GM12878 (cell line): ENCODE measurements at regions of chr10 and their contacts with region 1.

Region 1: DNA sequence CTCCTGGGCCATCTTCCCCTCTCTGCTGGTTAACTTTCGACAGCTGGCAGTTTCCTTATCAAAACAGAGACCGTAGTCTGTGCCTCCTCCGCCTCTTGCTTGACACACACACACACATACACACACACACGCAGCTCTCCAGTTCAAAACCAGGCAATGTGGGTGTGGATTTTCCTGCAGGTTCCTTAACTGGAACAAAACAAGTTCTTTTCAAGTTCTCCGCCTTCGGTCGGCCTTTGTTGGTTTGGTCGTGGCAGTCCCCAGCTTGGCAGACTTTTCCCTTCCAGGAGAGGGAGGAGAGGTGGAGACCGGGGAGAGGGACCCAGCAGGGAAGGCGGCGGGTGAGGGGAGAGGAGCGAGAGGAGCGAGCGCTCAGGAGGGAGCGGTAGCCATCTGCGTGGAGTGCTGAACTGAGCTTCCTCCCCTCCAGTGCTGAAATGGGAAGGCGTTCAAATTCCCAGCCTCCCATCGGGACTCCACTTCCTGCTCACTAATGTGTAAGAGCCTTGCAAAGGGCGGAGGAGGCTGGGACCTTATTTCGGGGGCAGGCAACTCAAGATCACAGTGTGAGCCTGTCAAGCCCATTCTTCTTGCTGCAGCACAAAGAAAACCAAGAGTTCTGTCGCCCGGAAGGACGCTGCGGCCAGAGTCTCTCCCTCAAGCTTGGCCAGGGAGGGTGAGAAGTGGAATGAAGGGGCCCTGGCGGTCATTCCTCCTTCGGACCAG is 120.6 kb downstream of the PRPF18 start:
- DNase-seq: no peak
- ATAC-seq: peak; percentile 77
- H3K4me3 ChIP-seq: peak overlapping the region; percentile 86
- H3K27ac ChIP-seq: peak overlapping the region; percentile 92
- H3K4me1 ChIP-seq: peaks cover 25% of the 10 kb centered on the region
- H3K27me3 ChIP-seq: no peaks in the 10 kb centered on the region
- CTCF ChIP-seq: no peak
- EP300 ChIP-seq: no peak
- POLR2A ChIP-seq: peak; percentile 65
- RAD21 ChIP-seq: no peak; the same call in 1 of the 2 replicates

Region 2: GRCh38 chr10:13684252-13684791 is 23.0 kb before region 1 on chr10:
- CTCF ChIA-PET with region 1: no interaction called
- POLR2A ChIA-PET with region 1: interaction called, 3 read pairs
- RAD21 ChIA-PET with region 1: interaction called, 5 read pairs
- SMC1A ChIA-PET with region 1: interaction called, 14 read pairs
- in situ Hi-C with region 1: no loop called
- intact Hi-C with region 1: no loop called
- DNase-seq: no peak
- ATAC-seq: no peak
- H3K4me3 ChIP-seq: no peak overlapping the region
- H3K27ac ChIP-seq: no peak overlapping the region
- H3K4me1 ChIP-seq: peaks cover 17% of the 10 kb centered on the region
- H3K27me3 ChIP-seq: no peaks in the 10 kb centered on the region
- CTCF ChIP-seq: no peak
- EP300 ChIP-seq: no peak
- POLR2A ChIP-seq: no peak
- RAD21 ChIP-seq: no peak

Region 3: DNA sequence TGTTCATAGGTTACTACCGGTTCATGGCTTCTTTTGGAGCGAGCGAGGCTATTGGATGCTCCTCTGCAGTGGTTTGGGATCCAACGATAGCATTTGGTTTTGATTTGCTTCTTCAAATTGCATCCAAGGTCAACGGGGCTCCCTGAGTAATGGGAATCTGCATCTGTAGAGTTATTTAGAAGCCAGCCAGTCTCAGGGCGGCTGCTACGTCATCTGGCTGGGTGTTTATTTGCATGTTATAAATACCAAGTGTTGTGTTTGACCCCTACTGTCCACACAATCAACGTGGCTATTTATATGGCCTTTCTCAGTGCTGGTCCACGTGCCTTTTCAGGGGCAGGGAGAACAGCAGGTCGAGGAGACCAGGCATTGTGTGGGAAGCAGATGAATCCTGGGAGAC is 17.2 kb after region 1 on chr10:
- CTCF ChIA-PET with region 1: interaction called, 10 read pairs
- POLR2A ChIA-PET with region 1: interaction called, 4 read pairs
- RAD21 ChIA-PET with region 1: interaction called, 10 read pairs
- SMC1A ChIA-PET with region 1: interaction called, 10 read pairs
- in situ Hi-C with region 1: no loop called
- intact Hi-C with region 1: no loop called
- DNase-seq: no peak
- ATAC-seq: no peak
- H3K4me3 ChIP-seq: no peak overlapping the region
- H3K27ac ChIP-seq: no peak overlapping the region
- H3K4me1 ChIP-seq: peaks cover 20% of the 10 kb centered on the region
- H3K27me3 ChIP-seq: no peaks in the 10 kb centered on the region
- CTCF ChIP-seq: no peak
- EP300 ChIP-seq: no peak
- POLR2A ChIP-seq: no peak
- RAD21 ChIP-seq: no peak

Region 4: GRCh38 chr10:13751191-13751764 is 44.0 kb after region 1 on chr10:
- CTCF ChIA-PET with region 1: interaction called, 4 read pairs
- POLR2A ChIA-PET with region 1: interaction called, 31 read pairs
- RAD21 ChIA-PET with region 1: interaction called, 146 read pairs
- SMC1A ChIA-PET with region 1: interaction called, 81 read pairs
- in situ Hi-C with region 1: no loop called
- intact Hi-C with region 1: loop called (anchors 5 kb)
- DNase-seq: peak; percentile 60
- ATAC-seq: peak; percentile 69
- H3K4me3 ChIP-seq: no peak overlapping the region
- H3K27ac ChIP-seq: peak overlapping the region; percentile 78
- H3K4me1 ChIP-seq: peaks cover 73% of the 10 kb centered on the region
- H3K27me3 ChIP-seq: no peaks in the 10 kb centered on the region
- CTCF ChIP-seq: no peak
- EP300 ChIP-seq: peak in 1 of 2 experiments; percentile 64; a peak in 2 of 4 replicates
- POLR2A ChIP-seq: no peak
- RAD21 ChIP-seq: no peak

Region 5: GRCh38 chr10:13769955-13770354 is 62.6 kb after region 1 on chr10:
- CTCF ChIA-PET with region 1: interaction called, 5 read pairs
- POLR2A ChIA-PET with region 1: interaction called, 25 read pairs
- RAD21 ChIA-PET with region 1: interaction called, 146 read pairs
- SMC1A ChIA-PET with region 1: interaction called, 42 read pairs
- in situ Hi-C with region 1: no loop called
- intact Hi-C with region 1: loop called (anchors 5 kb)
- DNase-seq: no peak
- ATAC-seq: peak; percentile 78
- H3K4me3 ChIP-seq: no peak overlapping the region
- H3K27ac ChIP-seq: no peak overlapping the region
- H3K4me1 ChIP-seq: peaks cover 11% of the 10 kb centered on the region
- H3K27me3 ChIP-seq: no peaks in the 10 kb centered on the region
- CTCF ChIP-seq: no peak
- EP300 ChIP-seq: peak; percentile 14 to 25; a peak in 2 of 4 replicates
- POLR2A ChIP-seq: no peak
- RAD21 ChIP-seq: no peak